ENCODE measurements at regions of chr2 and their contacts with region 1.

Region 1: GRCh38 chr2:177332041-177332991 is 60.3 kb upstream of the AGPS start:
- DNase-seq: peak in 4 of 5 donors; percentile 55 to 62 (median 60)
- H3K4me3 ChIP-seq: no peak overlapping the region
- H3K4me3 Mint-ChIP-seq: no peak overlapping the region
- H3K27ac ChIP-seq: no peak overlapping the region
- H3K27ac Mint-ChIP-seq: peak overlapping the region in 4 of 7 donors; percentile 33 to 78 (median 64)
- H3K4me1 ChIP-seq: peaks cover 10% of the 10 kb centered on the region
- H3K4me1 Mint-ChIP-seq: peaks cover 0 to 13% (median 6%) of the 10 kb centered on the region in 4 donors
- H3K27me3 ChIP-seq: no peaks in the 10 kb centered on the region
- H3K27me3 Mint-ChIP-seq: no peaks in the 10 kb centered on the region

Region 2: GRCh38 chr2:177296040-177296439 is 36.3 kb before region 1 on chr2:
- CTCF ChIA-PET with region 1: interaction called, 15 read pairs
- POLR2A ChIA-PET with region 1: no interaction called
- intact Hi-C with region 1: loop called (anchors 2 kb)
- DNase-seq: peak in 4 of 5 donors; percentile 34 to 49 (median 43)
- H3K4me3 ChIP-seq: no peak overlapping the region
- H3K4me3 Mint-ChIP-seq: peak overlapping the region in 1 of 8 donors; percentile 4
- H3K27ac ChIP-seq: no peak overlapping the region
- H3K27ac Mint-ChIP-seq: peak overlapping the region in 3 of 7 donors; percentile 16 to 72 (median 37)
- H3K4me1 ChIP-seq: peaks cover 9% of the 10 kb centered on the region
- H3K4me1 Mint-ChIP-seq: peaks cover 4 to 7% (median 5%) of the 10 kb centered on the region in 4 donors
- H3K27me3 ChIP-seq: no peaks in the 10 kb centered on the region
- H3K27me3 Mint-ChIP-seq: no peaks in the 10 kb centered on the region

Region 3: GRCh38 chr2:177419274-177419673 is 87.0 kb after region 1 on chr2:
- CTCF ChIA-PET with region 1: interaction called, 87 read pairs
- POLR2A ChIA-PET with region 1: no interaction called
- intact Hi-C with region 1: loop called (anchors 1 kb)
- DNase-seq: no peak
- H3K4me3 ChIP-seq: no peak overlapping the region
- H3K4me3 Mint-ChIP-seq: no peak overlapping the region
- H3K27ac ChIP-seq: no peak overlapping the region
- H3K27ac Mint-ChIP-seq: no peak overlapping the region
- H3K4me1 ChIP-seq: peaks cover 5% of the 10 kb centered on the region
- H3K4me1 Mint-ChIP-seq: peaks cover 8 to 20% (median 18%) of the 10 kb centered on the region in 4 donors
- H3K27me3 ChIP-seq: no peaks in the 10 kb centered on the region
- H3K27me3 Mint-ChIP-seq: no peaks in the 10 kb centered on the region

Region 4: DNA sequence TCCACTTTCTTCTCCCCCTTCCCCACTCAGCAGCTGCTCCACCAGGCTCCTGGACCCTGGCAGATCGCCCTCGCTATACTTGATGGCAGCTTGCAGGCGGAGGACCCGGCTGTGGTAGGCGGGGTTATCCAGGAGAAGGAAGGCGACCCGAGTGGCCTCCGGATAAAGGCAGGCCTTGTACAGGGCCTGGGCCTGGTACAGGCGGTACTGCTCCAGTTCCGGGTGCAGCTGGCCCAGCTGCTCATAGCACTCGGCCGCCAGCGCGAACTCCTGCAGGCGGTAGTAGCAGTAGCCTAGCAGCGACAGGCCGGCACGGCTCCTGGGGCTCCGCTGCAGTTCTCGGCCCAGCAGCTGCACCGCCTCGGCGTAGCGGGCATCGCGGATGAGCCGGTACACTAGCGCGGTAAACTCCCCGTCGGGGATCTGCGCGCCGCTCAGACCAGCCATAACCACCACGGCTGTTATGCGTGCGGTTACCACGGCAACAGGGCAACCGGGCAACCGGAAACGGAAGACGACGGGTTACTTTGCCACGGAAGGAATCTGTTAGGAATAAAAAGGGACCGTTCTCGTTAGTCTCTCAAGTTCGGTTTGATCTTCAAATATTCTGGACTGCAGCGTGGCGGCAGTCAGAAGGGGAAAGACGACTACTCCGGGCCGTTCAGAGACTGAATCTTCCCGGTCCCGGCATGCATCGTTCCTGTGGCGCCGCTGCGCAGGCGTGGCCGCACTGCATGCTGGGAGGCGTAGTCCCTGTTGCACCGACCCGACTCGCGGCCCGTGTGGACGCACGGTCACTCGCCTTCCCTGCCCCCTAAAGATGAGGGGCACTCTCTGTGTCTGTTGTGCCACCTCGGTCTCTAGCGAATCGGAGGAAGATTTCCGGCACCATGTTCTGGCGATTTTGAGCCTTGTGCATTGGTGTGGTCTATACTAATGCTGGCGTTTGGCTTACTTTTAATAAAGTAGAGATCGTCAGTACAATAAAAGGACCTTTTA is 286.2 kb after region 1 on chr2:
- CTCF ChIA-PET with region 1: no interaction called
- POLR2A ChIA-PET with region 1: no interaction called
- intact Hi-C with region 1: loop called (anchors 5 kb)
- DNase-seq: peak; percentile 92 to 94 (median 93)
- H3K4me3 ChIP-seq: peak overlapping the region; percentile 85 to 87
- H3K4me3 Mint-ChIP-seq: peak overlapping the region; percentile 92 to 98 (median 97)
- H3K27ac ChIP-seq: peak overlapping the region; percentile 97
- H3K27ac Mint-ChIP-seq: peak overlapping the region; percentile 98 to 100 (median 100)
- H3K4me1 ChIP-seq: peaks cover 5% of the 10 kb centered on the region
- H3K4me1 Mint-ChIP-seq: peaks cover 3 to 19% (median 8%) of the 10 kb centered on the region in 4 donors
- H3K27me3 ChIP-seq: no peaks in the 10 kb centered on the region
- H3K27me3 Mint-ChIP-seq: peaks cover 4 to 9% of the 10 kb centered on the region in 2 donors

Region 5: GRCh38 chr2:177763532-177764265 is 431.4 kb after region 1 on chr2:
- CTCF ChIA-PET with region 1: interaction called, 34 read pairs
- POLR2A ChIA-PET with region 1: interaction called, 3 read pairs
- intact Hi-C with region 1: loop called (anchors 1 kb)
- DNase-seq: peak; percentile 60 to 74 (median 70)
- H3K4me3 ChIP-seq: no peak overlapping the region
- H3K4me3 Mint-ChIP-seq: peak overlapping the region in 3 of 8 donors; percentile 14 to 24 (median 22)
- H3K27ac ChIP-seq: no peak overlapping the region
- H3K27ac Mint-ChIP-seq: no peak overlapping the region
- H3K4me1 ChIP-seq: peaks cover 5% of the 10 kb centered on the region
- H3K4me1 Mint-ChIP-seq: peaks cover 0 to 6% (median 3%) of the 10 kb centered on the region in 4 donors
- H3K27me3 ChIP-seq: peaks cover 6% of the 10 kb centered on the region
- H3K27me3 Mint-ChIP-seq: peaks cover 4 to 12% of the 10 kb centered on the region in 2 donors